ENCODE measurements at regions of chr2 and their contacts with region 1.

Region 1: DNA sequence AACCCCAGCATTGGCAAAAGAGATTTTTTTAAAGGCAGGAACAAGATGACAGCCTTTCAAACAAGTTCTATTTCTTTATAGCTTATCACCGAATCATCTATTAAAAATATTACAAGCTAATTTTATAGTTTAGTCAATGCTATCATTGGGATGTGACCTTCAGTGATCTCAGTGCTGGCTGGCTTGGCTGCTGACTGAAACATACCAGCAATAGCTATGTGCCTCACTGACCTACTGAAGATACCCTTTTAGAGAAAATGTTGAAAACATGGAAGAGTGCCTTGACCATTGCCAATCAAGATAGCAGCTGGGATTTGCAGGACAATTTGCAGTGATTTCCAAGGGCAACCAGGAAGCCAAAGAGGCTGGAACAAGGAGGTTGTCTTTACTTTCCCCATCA is 44.0 kb downstream of the CSRNP3 start:
- DNase-seq: peak in 1 of 5 donors; percentile 11
- ATAC-seq: peak in 3 of 4 donors; percentile 75 to 81 (median 78)
- H3K4me3 ChIP-seq: no peak overlapping the region
- H3K27ac ChIP-seq: no peak overlapping the region
- H3K4me1 ChIP-seq: peaks cover 0 to 10% (median 0%) of the 10 kb centered on the region in 12 donors
- H3K27me3 ChIP-seq: no peaks in the 10 kb centered on the region
- CTCF ChIP-seq: no peak
- POLR2A ChIP-seq: no peak

Region 2: DNA sequence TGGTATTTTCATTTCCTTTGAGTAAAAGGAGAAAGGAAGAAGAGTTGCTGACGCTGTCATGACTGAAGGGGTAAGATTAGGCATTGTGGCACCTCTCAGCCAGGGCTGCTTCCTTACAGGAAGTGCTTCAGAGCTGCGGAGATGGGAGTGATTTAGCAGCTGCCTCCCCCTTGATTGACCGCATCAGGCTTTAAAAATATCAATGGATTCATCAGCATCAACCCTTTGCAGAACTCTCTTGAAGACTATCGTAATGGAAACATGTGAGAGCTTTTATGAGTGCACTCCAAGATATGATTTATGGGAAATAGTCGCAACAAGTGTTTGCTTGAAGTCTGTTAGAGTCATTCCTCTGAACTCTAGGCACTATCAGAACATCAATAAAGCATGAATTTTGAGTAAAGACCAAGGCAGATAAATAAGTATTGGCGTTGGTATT is 97.1 kb after region 1 on chr2:
- intact Hi-C with region 1: loop called in 1 of 10 experiments (anchors 10 kb)
- DNase-seq: no peak
- ATAC-seq: no peak
- H3K4me3 ChIP-seq: no peak overlapping the region
- H3K27ac ChIP-seq: no peak overlapping the region
- H3K4me1 ChIP-seq: no peaks in the 10 kb centered on the region
- H3K27me3 ChIP-seq: no peaks in the 10 kb centered on the region
- CTCF ChIP-seq: no peak
- POLR2A ChIP-seq: no peak

Measured in heart left ventricle (tissue), 16 donors.